CD8-positive, alpha-beta memory T cell (primary cell): ENCODE measurements at regions of chr15 and their contacts with region 1.

Region 1: DNA sequence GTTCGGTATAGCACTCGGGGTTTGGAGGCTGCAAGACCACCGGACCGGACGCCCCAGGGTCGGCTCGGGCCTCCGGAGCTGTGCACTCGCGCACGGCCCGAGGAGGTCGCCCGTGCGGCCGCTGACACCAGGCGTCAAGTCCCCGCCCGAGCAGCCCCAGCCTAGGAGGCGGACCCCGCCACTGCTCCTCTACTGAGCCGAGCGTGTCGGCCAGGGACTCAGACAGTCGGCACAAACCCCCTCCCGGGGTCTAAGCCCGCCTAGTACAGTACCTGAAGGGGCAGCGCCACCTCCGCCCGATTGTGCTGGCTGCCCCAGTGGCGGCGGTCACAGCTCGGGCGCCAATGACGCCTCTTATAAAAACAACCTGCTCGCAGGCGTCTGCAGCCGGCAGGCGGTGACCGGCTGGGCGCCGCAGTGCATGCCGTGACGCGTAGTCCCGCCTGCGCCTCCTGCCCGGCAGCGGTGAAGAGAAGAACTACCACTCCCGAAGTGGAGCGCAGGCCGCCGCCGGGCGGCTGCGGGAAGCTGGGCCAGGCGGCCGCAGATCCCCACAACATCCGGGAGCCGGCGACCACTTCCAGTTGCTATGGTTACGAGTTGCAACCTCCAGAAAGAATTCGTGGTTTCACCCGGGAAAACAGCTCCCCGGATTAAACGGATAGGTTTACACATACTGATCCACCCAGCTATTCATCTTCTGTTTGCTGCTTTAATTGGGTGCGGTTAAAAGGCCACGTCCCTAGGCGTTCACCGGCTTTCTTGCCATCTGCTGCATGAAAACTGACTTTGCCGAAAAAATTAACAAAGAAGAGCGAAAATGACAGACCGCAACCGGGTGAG is at the starts of genes CCPG1 and PIERCE2:
- DNase-seq: peak; percentile 83 to 92 (median 90)
- H3K4me3 ChIP-seq: peak within 1 kb of the TSS; percentile 63
- H3K4me3 Mint-ChIP-seq: peak within 1 kb of the TSS; percentile 89 to 97 (median 93)
- H3K27ac ChIP-seq: peak within 1 kb of the TSS; percentile 88
- H3K27ac Mint-ChIP-seq: peak within 1 kb of the TSS; percentile 86 to 98 (median 96)
- H3K4me1 ChIP-seq: peaks cover 27% of the 10 kb centered on the region
- H3K4me1 Mint-ChIP-seq: peaks cover 24 to 46% (median 30%) of the 10 kb centered on the region in 3 donors
- H3K27me3 ChIP-seq: no peaks in the 10 kb centered on the region
- H3K27me3 Mint-ChIP-seq: peaks cover 0 to 3% of the 10 kb centered on the region in 2 donors
- total RNA-seq, gene CCPG1: 13.1 to 14.2 TPM
- total RNA-seq, gene PIERCE2: 0.44 TPM in 1 of 2 experiments, not detected in the other

Region 2: GRCh38 chr15:54840621-54841398 is 567.4 kb before region 1 on chr15:
- CTCF ChIA-PET with region 1: no interaction called
- POLR2A ChIA-PET with region 1: no interaction called
- DNase-seq: no peak
- H3K4me3 ChIP-seq: no peak overlapping the region
- H3K4me3 Mint-ChIP-seq: no peak overlapping the region
- H3K27ac ChIP-seq: no peak overlapping the region
- H3K27ac Mint-ChIP-seq: no peak overlapping the region
- H3K4me1 ChIP-seq: no peaks in the 10 kb centered on the region
- H3K4me1 Mint-ChIP-seq: no peaks in the 10 kb centered on the region
- H3K27me3 ChIP-seq: no peaks in the 10 kb centered on the region
- H3K27me3 Mint-ChIP-seq: peaks cover 0 to 6% of the 10 kb centered on the region in 2 donors

Region 3: DNA sequence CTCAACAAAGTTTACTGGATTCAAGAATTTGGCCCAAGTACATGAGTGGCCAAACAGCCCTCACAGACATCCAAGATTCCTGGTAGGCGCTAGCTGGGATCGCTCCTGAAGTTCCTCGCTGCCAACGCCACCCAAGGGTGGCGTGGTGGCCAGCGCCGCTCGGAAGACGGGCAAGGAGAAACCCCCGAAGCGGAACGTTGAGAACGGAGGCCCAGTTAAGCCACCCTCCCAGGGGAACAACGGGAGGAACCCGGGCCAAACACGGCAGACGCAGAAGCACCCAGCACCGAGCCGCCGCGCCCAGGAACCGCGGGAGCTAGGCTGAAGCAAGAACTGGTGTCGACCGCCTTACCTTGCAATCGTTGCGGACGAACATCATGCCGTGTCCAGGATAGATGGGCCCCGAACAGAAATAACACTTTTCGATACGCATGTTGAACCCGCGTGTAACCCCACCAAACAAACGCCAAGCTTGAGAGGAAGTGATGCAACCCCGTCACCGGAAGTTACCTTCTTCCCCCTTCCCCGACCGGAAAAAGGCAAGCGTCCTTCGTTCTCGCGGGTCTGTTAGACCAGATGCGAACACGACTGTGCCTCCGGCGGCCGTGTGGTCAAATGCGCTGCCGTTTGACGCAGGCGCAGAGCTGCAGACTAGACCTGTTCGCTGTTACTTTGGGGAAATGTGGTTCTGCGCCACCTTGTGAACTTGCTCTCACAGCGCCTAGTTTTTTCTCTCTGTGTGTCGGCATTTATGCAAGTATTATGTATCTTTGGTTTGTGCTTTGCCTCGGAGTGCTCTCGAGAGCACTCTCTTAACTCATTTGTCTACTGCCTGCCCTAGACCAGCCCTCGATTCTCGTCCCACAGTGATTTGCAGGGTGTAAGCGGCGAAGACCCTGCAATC is 211.5 kb before region 1 on chr15 and contains the start of gene RSL24D1:
- CTCF ChIA-PET with region 1: interaction called, 3 read pairs
- POLR2A ChIA-PET with region 1: interaction called, 12 read pairs
- DNase-seq: peak; percentile 92 to 98 (median 96)
- H3K4me3 ChIP-seq: peak within 1 kb of the TSS; percentile 97
- H3K4me3 Mint-ChIP-seq: no peak within 1 kb of the TSS
- H3K27ac ChIP-seq: peak within 1 kb of the TSS; percentile 94
- H3K27ac Mint-ChIP-seq: no peak within 1 kb of the TSS
- H3K4me1 ChIP-seq: peaks cover 36% of the 10 kb centered on the region
- H3K4me1 Mint-ChIP-seq: peaks cover 13 to 33% (median 15%) of the 10 kb centered on the region in 3 donors
- H3K27me3 ChIP-seq: no peaks in the 10 kb centered on the region
- H3K27me3 Mint-ChIP-seq: no peaks in the 10 kb centered on the region
- total RNA-seq, gene RSL24D1: 145 to 154 TPM

Region 4: GRCh38 chr15:55290528-55291057 is 117.6 kb before region 1 on chr15:
- CTCF ChIA-PET with region 1: no interaction called
- POLR2A ChIA-PET with region 1: no interaction called
- DNase-seq: peak; percentile 75 to 90 (median 80)
- H3K4me3 ChIP-seq: peak overlapping the region; percentile 87
- H3K4me3 Mint-ChIP-seq: peak overlapping the region; percentile 92 to 99 (median 97)
- H3K27ac ChIP-seq: peak overlapping the region; percentile 91
- H3K27ac Mint-ChIP-seq: peak overlapping the region; percentile 94 to 99 (median 96)
- H3K4me1 ChIP-seq: peaks cover 16% of the 10 kb centered on the region
- H3K4me1 Mint-ChIP-seq: peaks cover 29 to 39% (median 39%) of the 10 kb centered on the region in 3 donors
- H3K27me3 ChIP-seq: no peaks in the 10 kb centered on the region
- H3K27me3 Mint-ChIP-seq: no peaks in the 10 kb centered on the region

Region 5: DNA sequence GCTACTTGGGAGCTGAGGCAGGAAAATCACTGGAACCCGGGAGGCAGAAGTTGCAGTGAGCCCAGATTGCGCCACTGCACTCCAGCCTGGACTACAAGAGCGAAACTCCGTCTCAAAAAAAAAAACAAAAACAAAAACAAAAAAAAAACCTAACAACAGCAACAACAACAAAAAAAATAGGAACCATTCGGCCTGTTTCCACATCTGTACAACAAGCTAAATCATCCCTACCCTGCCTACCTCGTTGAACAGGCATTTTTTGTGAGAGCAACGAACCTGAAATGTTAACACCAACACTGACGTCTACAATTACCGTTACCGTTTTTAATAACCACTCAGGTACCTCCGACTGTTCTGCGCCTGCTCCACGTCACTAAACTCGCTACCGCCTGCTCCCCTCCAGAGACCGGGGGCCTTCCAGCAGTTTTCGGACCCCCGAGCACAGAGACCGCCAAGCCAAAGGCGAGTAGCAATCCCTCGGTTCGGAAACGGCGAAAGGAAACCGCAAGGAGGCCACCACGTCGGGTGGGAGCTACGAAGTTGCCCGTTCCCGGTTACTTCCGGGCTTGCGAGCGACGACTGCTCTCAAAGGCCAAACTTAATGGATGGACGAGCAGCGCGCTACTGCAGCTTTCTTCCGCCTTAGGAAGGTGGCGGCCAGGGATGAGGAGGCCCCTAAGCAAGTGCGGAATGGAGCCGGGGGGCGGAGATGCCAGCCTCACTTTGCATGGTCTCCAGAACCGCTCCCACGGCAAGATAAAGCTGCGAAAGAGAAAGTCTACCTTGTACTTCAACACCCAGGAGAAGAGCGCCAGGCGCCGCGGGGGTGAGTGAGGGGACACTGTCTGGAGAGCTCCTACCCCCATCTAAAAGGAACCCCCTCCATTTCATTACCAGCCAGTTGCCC is 89.3 kb before region 1 on chr15 and contains the starts of genes PIGB and PIGBOS1:
- CTCF ChIA-PET with region 1: interaction called, 18 read pairs
- POLR2A ChIA-PET with region 1: interaction called, 18 read pairs
- DNase-seq: peak; percentile 62 to 86 (median 84)
- H3K4me3 ChIP-seq: peak within 1 kb of the TSS; percentile 91
- H3K4me3 Mint-ChIP-seq: peak within 1 kb of the TSS; percentile 98 to 100 (median 98)
- H3K27ac ChIP-seq: peak within 1 kb of the TSS; percentile 99
- H3K27ac Mint-ChIP-seq: peak within 1 kb of the TSS; percentile 99 to 100 (median 100)
- H3K4me1 ChIP-seq: peaks cover 38% of the 10 kb centered on the region
- H3K4me1 Mint-ChIP-seq: peaks cover 70 to 86% (median 81%) of the 10 kb centered on the region in 3 donors
- H3K27me3 ChIP-seq: no peaks in the 10 kb centered on the region
- H3K27me3 Mint-ChIP-seq: peaks cover 0 to 2% of the 10 kb centered on the region in 2 donors
- total RNA-seq, gene PIGB: 17.4 to 17.9 TPM
- total RNA-seq, gene PIGBOS1: 11.5 to 11.9 TPM

Region 6: DNA sequence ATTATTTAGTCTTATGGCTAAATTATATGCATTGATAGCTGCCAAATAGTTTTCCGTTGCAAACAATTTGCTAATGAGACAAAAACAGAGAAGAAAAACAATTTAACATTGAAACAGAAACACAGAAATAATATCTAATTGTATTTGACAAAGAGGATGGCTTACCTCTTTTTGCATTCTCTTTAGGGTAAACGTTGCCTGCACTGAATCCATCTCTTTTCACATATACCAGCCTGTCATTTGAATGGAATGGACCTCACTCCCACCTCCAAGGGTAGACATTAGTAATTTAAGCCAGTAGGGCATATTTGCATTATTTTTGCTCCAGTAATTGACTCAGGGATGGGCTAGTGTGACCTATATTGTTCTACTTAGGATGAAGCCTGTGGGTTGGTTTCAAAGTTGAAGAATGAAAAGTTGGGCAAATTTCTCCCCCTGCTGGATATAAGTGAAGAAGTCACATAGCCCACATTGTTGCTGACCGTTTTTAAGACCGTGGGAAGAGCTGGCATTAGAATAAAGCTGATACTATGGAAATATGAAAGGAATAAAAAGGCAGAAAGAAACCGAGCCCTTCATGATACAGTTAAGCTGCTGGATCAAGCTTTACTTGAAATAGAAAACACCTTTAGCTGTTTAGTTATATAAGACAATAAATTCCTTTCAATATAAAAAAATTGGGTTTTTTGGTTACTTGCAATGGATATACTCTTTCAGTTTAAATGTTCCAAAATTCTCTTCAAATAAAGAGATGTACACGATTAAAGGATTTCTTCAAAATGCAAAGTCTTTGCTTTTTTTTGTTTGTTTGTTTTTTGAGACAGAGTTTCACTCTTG is 27.0 kb after region 1 on chr15:
- CTCF ChIA-PET with region 1: interaction called, 21 read pairs
- POLR2A ChIA-PET with region 1: no interaction called
- DNase-seq: peak in 2 of 5 donors; percentile 12 to 37
- H3K4me3 ChIP-seq: no peak overlapping the region
- H3K4me3 Mint-ChIP-seq: no peak overlapping the region
- H3K27ac ChIP-seq: no peak overlapping the region
- H3K27ac Mint-ChIP-seq: no peak overlapping the region
- H3K4me1 ChIP-seq: no peaks in the 10 kb centered on the region
- H3K4me1 Mint-ChIP-seq: peaks cover 5 to 13% (median 12%) of the 10 kb centered on the region in 3 donors
- H3K27me3 ChIP-seq: no peaks in the 10 kb centered on the region
- H3K27me3 Mint-ChIP-seq: peaks cover 4 to 7% of the 10 kb centered on the region in 2 donors